ENCODE measurements at regions of chr11 and their contacts with region 1.

Region 1: GRCh38 chr11:32870676-32871075 is 21.9 kb upstream of the QSER1 start:
- DNase-seq: peak in 21 of 35 experiments; percentile 4 to 44 (median 18)
- ATAC-seq: peak in 2 of 4 experiments; percentile 36 to 44
- H3K4me3 ChIP-seq: no peak overlapping the region
- H3K4me3 Mint-ChIP-seq: no peak overlapping the region
- H3K27ac ChIP-seq: no peak overlapping the region
- H3K27ac Mint-ChIP-seq: no peak overlapping the region
- H3K4me1 ChIP-seq: no peaks in the 10 kb centered on the region
- H3K4me1 Mint-ChIP-seq: no peaks in the 10 kb centered on the region
- H3K27me3 ChIP-seq: no peaks in the 10 kb centered on the region
- H3K27me3 Mint-ChIP-seq: peaks cover 9 to 13% of the 10 kb centered on the region in 2 donors

Region 2: GRCh38 chr11:31240338-31240904 is 1630.3 kb before region 1 on chr11:
- CTCF ChIA-PET with region 1: no interaction called
- POLR2A ChIA-PET with region 1: interaction called in 1 of 2 experiments, 10 read pairs
- DNase-seq: peak in 9 of 35 experiments; percentile 0 to 52 (median 6)
- ATAC-seq: no peak
- H3K4me3 ChIP-seq: no peak overlapping the region
- H3K4me3 Mint-ChIP-seq: no peak overlapping the region
- H3K27ac ChIP-seq: no peak overlapping the region
- H3K27ac Mint-ChIP-seq: no peak overlapping the region
- H3K4me1 ChIP-seq: no peaks in the 10 kb centered on the region
- H3K4me1 Mint-ChIP-seq: no peaks in the 10 kb centered on the region
- H3K27me3 ChIP-seq: no peaks in the 10 kb centered on the region
- H3K27me3 Mint-ChIP-seq: peaks cover 0 to 4% of the 10 kb centered on the region in 2 donors

Region 3: GRCh38 chr11:32911413-32911812 is 40.7 kb after region 1 on chr11:
- CTCF ChIA-PET with region 1: no interaction called
- POLR2A ChIA-PET with region 1: no interaction called
- DNase-seq: no peak
- ATAC-seq: no peak
- H3K4me3 ChIP-seq: no peak overlapping the region
- H3K4me3 Mint-ChIP-seq: no peak overlapping the region
- H3K27ac ChIP-seq: no peak overlapping the region
- H3K27ac Mint-ChIP-seq: no peak overlapping the region
- H3K4me1 ChIP-seq: no peaks in the 10 kb centered on the region
- H3K4me1 Mint-ChIP-seq: peaks cover 20 to 28% (median 21%) of the 10 kb centered on the region in 3 donors
- H3K27me3 ChIP-seq: no peaks in the 10 kb centered on the region
- H3K27me3 Mint-ChIP-seq: no peaks in the 10 kb centered on the region

Measured in T-cell (primary cell).